Activated naive CD8-positive, alpha-beta T cell treated with anti-CD3 and anti-CD28 coated beads, Interleukin-2, amount 10 ng/mL, durations not matched to agents 7 days and 5 days (primary cell): ENCODE measurements at regions of chr20 and their contacts with region 1.

Region 1: GRCh38 chr20:45857114-45857881 is at the starts of genes ACOT8 and ZSWIM3:
- DNase-seq: peak; percentile 79
- ATAC-seq: peak; percentile 97
- H3K4me3 Mint-ChIP-seq: peak within 1 kb of the TSS; percentile 94
- H3K27ac Mint-ChIP-seq: peak within 1 kb of the TSS; percentile 99
- H3K4me1 Mint-ChIP-seq: peaks cover 29% of the 10 kb centered on the region
- H3K27me3 Mint-ChIP-seq: no peaks in the 10 kb centered on the region
- total RNA-seq, gene ACOT8: 35.4 to 38.6 TPM
- total RNA-seq, gene ZSWIM3: 5.3 to 5.7 TPM

Region 2: DNA sequence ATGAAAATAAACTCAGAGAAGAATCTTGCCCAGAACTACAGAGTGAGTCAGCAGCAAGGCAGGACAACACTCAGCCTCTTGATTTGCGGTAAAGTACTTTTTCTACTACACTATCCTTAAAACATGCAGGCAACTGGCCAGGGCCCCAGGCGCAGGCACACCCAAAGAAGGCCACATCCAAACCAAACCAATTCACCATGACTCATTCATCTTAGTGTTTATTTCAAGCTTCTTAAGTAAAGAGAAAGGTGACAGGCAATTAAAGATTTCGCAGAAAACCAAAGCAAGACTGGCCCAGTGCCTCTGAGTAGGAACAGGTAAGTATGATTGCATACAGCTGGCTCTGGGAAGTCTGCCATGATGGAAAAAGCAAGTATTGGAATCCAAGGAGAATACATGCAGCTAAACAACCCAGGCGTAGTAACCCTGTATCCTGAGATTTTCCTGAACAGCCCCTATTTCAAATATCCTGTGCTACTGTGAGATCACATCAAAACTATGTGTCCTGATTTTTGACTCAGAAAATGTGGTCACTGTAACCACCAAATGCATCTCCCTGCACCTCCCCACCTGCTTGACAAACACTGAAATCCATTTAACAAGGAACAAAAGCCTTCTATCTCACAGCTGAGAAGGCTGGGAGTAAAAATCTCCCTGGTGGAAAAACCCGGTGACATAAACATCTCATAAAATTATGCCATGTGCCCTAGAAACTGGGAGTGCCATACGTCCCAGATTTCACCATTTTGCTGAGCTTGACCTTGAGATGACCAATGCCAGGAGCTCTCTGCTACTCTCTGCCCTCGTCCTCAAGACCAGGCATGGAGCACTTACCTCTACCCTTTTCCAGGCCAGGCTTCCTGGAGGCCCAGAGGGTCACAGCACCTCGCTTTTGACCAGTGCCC is 78.0 kb before region 1 on chr20:
- POLR2A ChIA-PET with region 1: no interaction called
- DNase-seq: no peak
- ATAC-seq: no peak
- H3K4me3 Mint-ChIP-seq: no peak overlapping the region
- H3K27ac Mint-ChIP-seq: no peak overlapping the region
- H3K4me1 Mint-ChIP-seq: peaks cover 19% of the 10 kb centered on the region
- H3K27me3 Mint-ChIP-seq: peaks cover 6% of the 10 kb centered on the region

Region 3: DNA sequence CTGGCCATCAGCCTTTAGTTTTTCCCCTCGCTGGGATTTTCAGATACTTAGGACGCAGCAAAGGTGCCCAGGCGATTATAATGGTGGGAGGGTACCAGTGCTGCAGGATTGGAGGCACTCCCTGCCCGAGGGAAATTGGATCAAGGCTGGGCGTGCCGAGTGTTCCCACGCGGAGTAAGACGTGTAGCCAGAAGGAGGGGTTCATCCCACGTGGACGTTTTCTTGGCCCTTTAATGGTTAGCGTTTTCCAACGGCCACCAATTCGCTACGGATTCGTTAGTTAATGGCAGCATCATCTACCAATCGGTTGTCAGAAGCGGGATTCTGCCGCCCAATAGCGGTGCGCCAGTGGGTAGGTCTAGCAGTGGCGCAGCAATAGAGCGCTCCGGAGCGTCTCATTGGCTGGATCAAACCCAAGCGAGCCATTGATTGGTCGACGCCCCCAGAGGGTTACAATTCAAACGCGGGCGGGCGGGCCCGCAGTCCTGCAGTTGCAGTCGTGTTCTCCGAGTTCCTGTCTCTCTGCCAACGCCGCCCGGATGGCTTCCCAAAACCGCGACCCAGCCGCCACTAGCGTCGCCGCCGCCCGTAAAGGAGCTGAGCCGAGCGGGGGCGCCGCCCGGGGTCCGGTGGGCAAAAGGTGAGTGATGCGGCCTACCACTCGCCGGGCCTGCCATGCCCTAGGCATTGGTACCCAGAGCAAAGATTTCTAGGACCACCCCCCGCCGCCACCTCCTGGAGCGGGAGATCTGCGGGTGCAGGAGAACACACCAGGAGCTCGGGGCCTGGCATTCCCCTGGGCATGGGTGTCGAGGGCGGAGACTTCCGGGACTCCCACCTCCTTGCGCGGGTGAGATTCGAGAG is 44.9 kb before region 1 on chr20 and contains the start of gene UBE2C:
- POLR2A ChIA-PET with region 1: interaction called, 11 read pairs
- DNase-seq: peak; percentile 92
- ATAC-seq: peak; percentile 100
- H3K4me3 Mint-ChIP-seq: peak within 1 kb of the TSS; percentile 92
- H3K27ac Mint-ChIP-seq: peak within 1 kb of the TSS; percentile 87
- H3K4me1 Mint-ChIP-seq: peaks cover 23% of the 10 kb centered on the region
- H3K27me3 Mint-ChIP-seq: no peaks in the 10 kb centered on the region
- total RNA-seq, gene UBE2C: 153 to 154 TPM

Region 4: DNA sequence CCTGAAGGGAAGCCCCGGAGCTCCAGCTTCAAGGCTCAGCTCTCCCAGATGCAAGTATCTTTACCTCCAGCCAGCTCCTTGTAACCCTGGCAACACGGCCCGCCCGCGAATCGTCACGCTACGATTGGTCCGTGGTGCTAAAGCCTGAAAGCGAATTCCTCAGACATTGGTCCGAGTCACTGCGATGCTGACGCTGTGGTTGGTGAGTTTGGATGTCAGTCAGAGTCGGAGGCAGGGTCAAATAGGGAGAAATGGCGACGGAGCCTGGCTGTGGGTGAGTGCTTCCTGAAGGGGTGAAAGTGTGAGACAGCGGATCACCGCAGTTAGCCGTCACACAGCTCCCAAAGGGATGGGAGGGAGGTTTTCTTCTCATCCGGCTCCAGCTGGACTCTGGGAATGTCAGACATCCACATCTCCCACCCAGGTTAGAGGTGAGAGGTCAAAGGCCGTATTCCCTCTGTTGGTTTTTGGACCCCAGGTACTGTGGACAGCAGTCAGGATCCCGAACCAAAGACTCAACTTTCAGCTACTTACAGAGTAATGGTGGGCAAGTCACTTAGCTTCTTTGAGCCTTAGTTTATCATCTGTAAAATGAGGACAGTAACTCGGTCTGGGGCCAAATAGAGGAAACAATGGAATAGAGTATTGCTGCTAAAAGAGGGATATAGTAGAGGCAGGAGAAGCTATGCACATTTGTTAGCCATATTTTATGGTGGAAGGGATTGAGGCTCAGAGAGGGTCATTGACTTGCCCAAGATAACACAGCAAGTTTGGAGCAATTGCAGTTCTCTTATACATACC is 23.9 kb after region 1 on chr20 and contains the start of gene ZSWIM1:
- POLR2A ChIA-PET with region 1: interaction called, 24 read pairs
- DNase-seq: peak; percentile 97
- ATAC-seq: peak; percentile 99
- H3K4me3 Mint-ChIP-seq: peak within 1 kb of the TSS; percentile 87
- H3K27ac Mint-ChIP-seq: peak within 1 kb of the TSS; percentile 85
- H3K4me1 Mint-ChIP-seq: peaks cover 40% of the 10 kb centered on the region
- H3K27me3 Mint-ChIP-seq: no peaks in the 10 kb centered on the region
- total RNA-seq, gene ZSWIM1: 12.2 to 13.0 TPM

Region 5: GRCh38 chr20:45890985-45891983 is 34.0 kb after region 1 on chr20 and contains the starts of genes CTSA and NEURL2:
- POLR2A ChIA-PET with region 1: interaction called, 15 read pairs
- DNase-seq: peak; percentile 88
- ATAC-seq: peak; percentile 73
- H3K4me3 Mint-ChIP-seq: peak within 1 kb of the TSS; percentile 92
- H3K27ac Mint-ChIP-seq: peak within 1 kb of the TSS; percentile 86
- H3K4me1 Mint-ChIP-seq: peaks cover 27% of the 10 kb centered on the region
- H3K27me3 Mint-ChIP-seq: no peaks in the 10 kb centered on the region
- total RNA-seq, gene CTSA: 76.9 to 83.4 TPM
- total RNA-seq, gene NEURL2: 3.9 to 5.3 TPM

Region 6: GRCh38 chr20:45971675-45972499 is 114.6 kb after region 1 on chr20 and contains the start of gene ZNF335:
- POLR2A ChIA-PET with region 1: interaction called, 17 read pairs
- DNase-seq: peak; percentile 99
- ATAC-seq: peak; percentile 77
- H3K4me3 Mint-ChIP-seq: peak within 1 kb of the TSS; percentile 84
- H3K27ac Mint-ChIP-seq: peak within 1 kb of the TSS; percentile 91
- H3K4me1 Mint-ChIP-seq: peaks cover 12% of the 10 kb centered on the region
- H3K27me3 Mint-ChIP-seq: peaks cover 2% of the 10 kb centered on the region
- total RNA-seq, gene ZNF335: 43.3 to 43.7 TPM

Region 7: DNA sequence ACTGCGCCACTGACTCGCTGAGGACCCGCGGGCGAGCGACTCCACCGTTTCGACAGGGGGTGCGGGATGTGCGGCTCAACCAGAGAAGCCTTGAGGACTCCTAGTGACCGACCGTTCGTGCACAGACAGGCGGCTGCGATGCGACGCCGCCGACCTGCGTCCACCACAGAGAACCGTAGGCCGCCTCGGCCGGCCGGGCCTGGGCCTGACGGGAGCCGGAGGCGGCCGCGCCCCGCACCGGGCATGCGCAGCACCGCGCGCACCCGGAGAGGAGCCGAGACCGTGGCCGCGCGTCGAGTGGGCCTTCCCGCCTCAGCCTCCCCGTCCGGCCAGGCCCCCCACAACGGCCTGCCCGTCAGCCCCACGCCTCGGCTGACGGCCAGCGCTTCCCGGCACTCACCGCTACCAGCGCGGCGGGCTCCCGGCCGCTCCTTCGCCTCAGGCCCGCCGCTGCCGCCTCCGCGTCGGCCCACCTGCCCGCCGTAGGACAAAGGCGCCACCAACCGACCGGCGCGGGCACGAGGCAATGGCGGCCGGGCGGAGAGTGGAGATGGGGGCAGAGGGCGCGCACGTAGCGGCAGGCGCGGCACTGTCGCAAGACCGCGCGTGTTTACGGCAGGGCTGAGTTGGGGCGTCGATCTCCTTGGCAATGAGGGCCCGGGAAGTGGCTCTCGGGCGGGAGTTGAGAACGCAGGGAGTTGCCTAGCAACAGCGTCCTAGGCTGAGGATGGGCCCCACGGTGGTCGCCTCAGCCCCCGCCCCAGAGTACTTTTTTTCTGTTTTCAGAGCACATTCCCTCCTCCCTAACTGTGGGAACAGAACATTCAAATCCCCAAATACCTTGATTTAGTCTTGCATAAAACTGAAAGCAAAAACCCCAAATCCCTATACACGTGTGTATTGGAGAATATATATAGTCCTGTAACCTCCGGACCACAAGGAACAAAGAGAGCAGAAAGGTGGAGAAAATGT is 232.4 kb after region 1 on chr20 and contains the start of gene NCOA5:
- POLR2A ChIA-PET with region 1: no interaction called
- DNase-seq: peak; percentile 94
- ATAC-seq: peak; percentile 89
- H3K4me3 Mint-ChIP-seq: peak within 1 kb of the TSS; percentile 87
- H3K27ac Mint-ChIP-seq: peak within 1 kb of the TSS; percentile 86
- H3K4me1 Mint-ChIP-seq: peaks cover 29% of the 10 kb centered on the region
- H3K27me3 Mint-ChIP-seq: peaks cover 3% of the 10 kb centered on the region
- total RNA-seq, gene NCOA5: 27.8 to 32.8 TPM